ENCODE measurements at regions of chr15 and their contacts with region 1.

Region 1: DNA sequence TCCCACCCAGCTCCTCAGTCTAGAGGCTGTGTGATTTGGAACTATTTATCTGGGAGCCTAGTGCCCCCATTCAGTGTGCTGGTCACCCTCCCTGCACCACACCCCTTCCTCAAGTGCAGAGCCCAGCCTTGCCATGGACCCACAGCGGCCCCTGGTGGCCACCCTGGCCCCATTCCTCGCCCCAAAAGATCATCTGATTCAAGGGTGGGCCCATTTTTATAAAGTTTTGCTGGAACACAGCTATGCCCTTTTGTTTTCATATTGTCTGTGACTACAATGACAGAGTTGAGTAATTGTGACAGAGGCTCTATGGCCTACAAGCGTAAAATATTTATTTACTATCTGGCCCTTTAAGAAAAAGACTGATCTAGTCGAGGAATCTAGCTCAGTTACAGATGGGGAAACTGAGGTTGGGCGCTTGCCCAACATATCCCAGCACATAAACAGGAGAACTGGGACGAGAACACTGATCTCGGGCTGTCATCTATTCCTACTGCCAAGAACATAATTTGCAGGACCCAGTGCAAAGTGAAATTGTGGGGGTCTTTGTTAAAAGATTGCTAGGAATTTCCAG is 1.8 kb downstream of the FES start:
- DNase-seq: peak; percentile 42 to 63
- ATAC-seq: peak; percentile 60 to 62
- H3K4me3 ChIP-seq: peak overlapping the region in 3 of 4 donors; percentile 57 to 62 (median 61)
- H3K27ac ChIP-seq: peak overlapping the region; percentile 86 to 90 (median 88)
- H3K4me1 ChIP-seq: peaks cover 7 to 8% of the 10 kb centered on the region in 2 donors
- H3K27me3 ChIP-seq: no peaks in the 10 kb centered on the region
- CTCF ChIP-seq: peak; percentile 97 to 99 (median 98)
- POLR2A ChIP-seq: no peak

Region 2: GRCh38 chr15:90320061-90320884 is 565.9 kb before region 1 on chr15:
- in situ Hi-C with region 1: loop called (anchors 25 kb)
- intact Hi-C with region 1: loop called (anchors 10 kb)
- DNase-seq: peak; percentile 65 to 82
- ATAC-seq: peak; percentile 79 to 83
- H3K4me3 ChIP-seq: peak overlapping the region in 2 of 4 donors; percentile 10 to 37
- H3K27ac ChIP-seq: peak overlapping the region in 3 of 4 donors; percentile 2 to 56 (median 40)
- H3K4me1 ChIP-seq: peaks cover 12 to 16% of the 10 kb centered on the region in 2 donors
- H3K27me3 ChIP-seq: no peaks in the 10 kb centered on the region
- CTCF ChIP-seq: peak; percentile 94 to 99 (median 98)
- POLR2A ChIP-seq: no peak

Region 3: DNA sequence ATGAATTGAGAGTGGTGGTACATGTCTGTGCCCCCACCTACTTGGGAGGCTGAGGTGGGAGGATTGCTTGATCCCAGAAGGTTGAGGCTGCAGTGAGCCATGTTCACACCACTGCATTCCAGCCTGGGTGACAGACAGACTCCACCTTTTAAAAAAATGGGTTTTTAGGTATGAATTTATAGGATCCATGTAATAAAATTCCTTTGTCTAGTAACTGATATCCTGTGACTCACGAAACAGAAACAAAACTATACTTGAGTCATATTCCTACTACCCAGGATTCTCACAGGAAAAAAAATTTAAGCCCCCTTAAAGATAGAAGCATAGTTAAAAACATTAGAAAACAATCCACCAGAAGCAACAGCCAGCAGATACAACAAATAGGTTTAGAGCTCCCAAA is 366.4 kb before region 1 on chr15:
- in situ Hi-C with region 1: loop called in 1 of 4 experiments (anchors 25 kb)
- intact Hi-C with region 1: no loop called
- DNase-seq: no peak
- ATAC-seq: no peak
- H3K4me3 ChIP-seq: no peak overlapping the region
- H3K27ac ChIP-seq: no peak overlapping the region
- H3K4me1 ChIP-seq: no peaks in the 10 kb centered on the region
- H3K27me3 ChIP-seq: no peaks in the 10 kb centered on the region
- CTCF ChIP-seq: no peak
- POLR2A ChIP-seq: no peak

Region 4: GRCh38 chr15:90648137-90649070 is 237.7 kb before region 1 on chr15:
- in situ Hi-C with region 1: loop called (anchors 5 to 10 kb)
- intact Hi-C with region 1: loop called (anchors 1 kb)
- DNase-seq: peak; percentile 48 to 62
- ATAC-seq: peak; percentile 65 to 83
- H3K4me3 ChIP-seq: peak overlapping the region in 1 of 4 donors; percentile 37
- H3K27ac ChIP-seq: peak overlapping the region; percentile 58 to 79 (median 68)
- H3K4me1 ChIP-seq: peaks cover 3 to 4% of the 10 kb centered on the region in 2 donors
- H3K27me3 ChIP-seq: no peaks in the 10 kb centered on the region
- CTCF ChIP-seq: peak; percentile 92 to 95 (median 94)
- POLR2A ChIP-seq: peak in 1 of 2 donors; percentile 13

Region 5: GRCh38 chr15:90691982-90692773 is 193.9 kb before region 1 on chr15:
- in situ Hi-C with region 1: no loop called
- intact Hi-C with region 1: loop called (anchors 5 kb)
- DNase-seq: no peak
- ATAC-seq: no peak
- H3K4me3 ChIP-seq: no peak overlapping the region
- H3K27ac ChIP-seq: no peak overlapping the region
- H3K4me1 ChIP-seq: no peaks in the 10 kb centered on the region
- H3K27me3 ChIP-seq: no peaks in the 10 kb centered on the region
- CTCF ChIP-seq: no peak
- POLR2A ChIP-seq: no peak